ENCODE measurements at regions of chr16 and their contacts with region 1.

Region 1: GRCh38 chr16:70454222-70455034 is at the start of gene FCSK:
- DNase-seq: peak; percentile 90
- H3K4me3 ChIP-seq: peak within 1 kb of the TSS; percentile 77
- H3K27ac ChIP-seq: peak within 1 kb of the TSS; percentile 61
- H3K4me1 ChIP-seq: peaks cover 11% of the 10 kb centered on the region
- CTCF ChIP-seq: peak; percentile 67
- total RNA-seq, gene FCSK: 6.8 and 7.4 TPM in 2 replicates

Region 2: GRCh38 chr16:70380861-70381603 is 73.4 kb before region 1 on chr16:
- CTCF ChIA-PET with region 1: interaction called, 4 read pairs
- POLR2A ChIA-PET with region 1: interaction called, 14 read pairs
- intact Hi-C with region 1: loop called (anchors 1 kb)
- DNase-seq: peak; percentile 98
- H3K4me3 ChIP-seq: peak overlapping the region; percentile 89
- H3K27ac ChIP-seq: peak overlapping the region; percentile 84
- H3K4me1 ChIP-seq: peaks cover 17% of the 10 kb centered on the region
- CTCF ChIP-seq: peak; percentile 71

Region 3: DNA sequence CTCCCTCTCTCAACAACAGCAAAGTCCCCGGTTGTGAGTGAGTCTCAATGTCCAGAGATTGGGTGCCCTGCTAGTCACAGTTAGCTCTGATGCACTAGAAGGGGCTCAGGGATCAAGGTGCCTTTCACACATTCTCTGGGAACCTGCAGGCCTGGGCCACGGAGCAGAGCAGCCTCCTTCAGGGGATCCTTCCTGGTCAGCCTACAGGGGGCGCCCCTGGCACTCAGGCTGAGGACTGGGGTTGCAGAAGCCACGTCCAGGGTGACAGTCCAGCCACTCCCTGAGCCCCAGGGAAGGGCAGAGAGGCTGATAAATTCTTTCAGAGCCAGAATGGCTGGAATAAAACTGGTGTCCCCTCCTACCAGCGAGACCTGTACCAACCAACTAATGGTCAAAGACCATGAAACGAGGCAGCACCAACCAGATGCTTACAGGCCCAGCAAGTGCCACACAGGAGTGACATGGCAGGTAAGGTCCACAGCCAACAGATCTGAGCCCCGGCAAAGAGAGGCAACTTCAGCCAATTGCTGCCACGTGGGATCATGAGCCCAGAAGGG is 59.0 kb before region 1 on chr16:
- CTCF ChIA-PET with region 1: interaction called, 3 read pairs
- POLR2A ChIA-PET with region 1: interaction called, 6 read pairs
- intact Hi-C with region 1: loop called (anchors 1 kb)
- DNase-seq: peak; percentile 76
- H3K4me3 ChIP-seq: no peak overlapping the region
- H3K27ac ChIP-seq: no peak overlapping the region
- H3K4me1 ChIP-seq: peaks cover 5% of the 10 kb centered on the region
- CTCF ChIP-seq: peak; percentile 97

Region 4: DNA sequence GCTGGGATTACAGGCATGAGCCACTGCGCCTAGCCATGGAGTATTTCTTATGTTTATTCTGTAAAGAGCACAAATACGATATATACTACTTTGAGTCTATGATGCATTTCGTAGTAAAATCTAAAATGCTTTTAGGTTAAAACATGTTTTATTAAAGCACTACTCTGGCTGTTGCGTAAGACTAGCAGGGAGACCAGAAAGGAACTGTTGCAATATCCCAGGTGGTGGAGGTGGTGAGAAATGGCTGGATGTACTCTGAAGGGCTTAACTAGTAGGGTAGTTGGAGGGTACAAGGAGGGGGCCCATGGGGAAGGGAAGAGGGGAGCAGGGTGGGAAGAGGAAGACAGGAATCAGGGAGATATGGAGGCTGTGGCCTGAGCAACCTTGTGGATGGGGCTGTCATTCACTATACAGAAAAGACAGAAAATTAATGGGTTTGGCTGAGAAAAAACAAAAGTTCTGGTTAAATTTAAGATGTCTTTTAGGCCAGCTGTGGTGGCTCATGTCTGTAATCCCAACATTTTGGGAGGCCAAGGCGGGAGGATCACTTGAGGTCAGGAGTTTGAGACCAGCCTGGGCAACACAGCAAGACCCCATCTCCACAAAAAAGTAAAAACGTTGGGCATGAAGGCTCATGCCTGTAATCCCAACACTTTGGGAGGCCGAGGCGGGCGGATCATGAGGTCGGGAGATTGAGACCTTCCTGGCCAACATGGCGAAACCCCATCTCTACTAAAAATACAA is 51.3 kb before region 1 on chr16:
- CTCF ChIA-PET with region 1: no interaction called
- POLR2A ChIA-PET with region 1: interaction called, 8 read pairs
- intact Hi-C with region 1: loop called (anchors 2 kb)
- DNase-seq: no peak
- H3K4me3 ChIP-seq: no peak overlapping the region
- H3K27ac ChIP-seq: peak overlapping the region; percentile 96
- H3K4me1 ChIP-seq: peaks cover 72% of the 10 kb centered on the region
- CTCF ChIP-seq: no peak

Region 5: DNA sequence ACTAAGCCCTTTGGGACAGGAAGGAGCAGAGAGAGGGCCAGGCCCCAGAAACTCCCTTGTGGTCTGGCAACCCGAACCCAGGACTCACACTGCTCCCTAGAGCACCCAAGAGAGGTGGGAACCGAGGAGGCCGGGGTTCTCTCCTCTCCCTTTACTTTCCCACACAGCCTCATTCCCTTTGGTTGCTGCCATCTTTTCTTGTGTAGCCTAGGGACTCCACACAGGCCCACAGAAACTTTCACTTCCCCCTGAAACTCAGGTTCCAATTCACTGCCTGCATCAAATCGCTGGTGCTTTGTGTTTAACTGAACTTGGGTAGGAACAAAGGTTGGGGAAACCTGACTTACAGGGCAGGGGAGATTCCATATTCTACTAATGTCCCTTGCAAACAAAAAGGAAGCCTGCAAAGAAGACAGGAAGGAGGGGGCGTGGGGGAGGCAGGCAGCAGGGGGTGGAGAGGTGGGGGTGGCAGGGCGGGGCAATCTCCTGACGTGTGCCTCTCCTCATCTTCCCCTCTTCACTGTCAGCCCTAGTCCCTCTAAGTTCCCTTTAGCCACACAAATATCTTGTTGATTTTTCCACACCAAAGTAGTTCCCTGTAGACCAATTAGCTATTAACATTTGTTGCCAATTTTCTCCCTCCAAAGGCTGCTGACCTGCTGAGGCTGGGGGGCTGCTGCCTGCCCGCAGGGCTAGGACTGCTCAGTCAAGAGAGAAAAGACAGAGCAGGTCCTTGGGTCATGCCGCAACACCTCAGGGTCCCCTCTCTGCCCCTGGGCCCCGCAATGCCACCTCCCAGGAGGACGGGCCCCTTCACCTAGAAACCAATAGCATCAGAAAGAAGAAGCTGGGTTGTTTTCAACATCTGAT is 23.5 kb before region 1 on chr16:
- CTCF ChIA-PET with region 1: interaction called, 3 read pairs
- POLR2A ChIA-PET with region 1: interaction called, 12 read pairs
- intact Hi-C with region 1: no loop called
- DNase-seq: peak; percentile 94
- H3K4me3 ChIP-seq: peak overlapping the region; percentile 59
- H3K27ac ChIP-seq: peak overlapping the region; percentile 100
- H3K4me1 ChIP-seq: peaks cover 78% of the 10 kb centered on the region
- CTCF ChIP-seq: no peak

Region 6: GRCh38 chr16:70438969-70439862 is 15.2 kb before region 1 on chr16 and contains the start of gene ST3GAL2:
- CTCF ChIA-PET with region 1: interaction called, 6 read pairs
- POLR2A ChIA-PET with region 1: interaction called, 19 read pairs
- intact Hi-C with region 1: loop called (anchors 2 kb)
- DNase-seq: peak; percentile 96
- H3K4me3 ChIP-seq: peak within 1 kb of the TSS; percentile 97
- H3K27ac ChIP-seq: peak within 1 kb of the TSS; percentile 68
- H3K4me1 ChIP-seq: peaks cover 31% of the 10 kb centered on the region
- CTCF ChIP-seq: no peak
- total RNA-seq, gene ST3GAL2: 42.6 and 44.6 TPM in 2 replicates

Region 7: GRCh38 chr16:70512456-70512855 is 58.0 kb after region 1 on chr16:
- CTCF ChIA-PET with region 1: no interaction called
- POLR2A ChIA-PET with region 1: no interaction called
- intact Hi-C with region 1: no loop called
- DNase-seq: no peak
- H3K4me3 ChIP-seq: no peak overlapping the region
- H3K27ac ChIP-seq: no peak overlapping the region
- H3K4me1 ChIP-seq: peaks cover 13% of the 10 kb centered on the region
- CTCF ChIP-seq: no peak

Region 8: DNA sequence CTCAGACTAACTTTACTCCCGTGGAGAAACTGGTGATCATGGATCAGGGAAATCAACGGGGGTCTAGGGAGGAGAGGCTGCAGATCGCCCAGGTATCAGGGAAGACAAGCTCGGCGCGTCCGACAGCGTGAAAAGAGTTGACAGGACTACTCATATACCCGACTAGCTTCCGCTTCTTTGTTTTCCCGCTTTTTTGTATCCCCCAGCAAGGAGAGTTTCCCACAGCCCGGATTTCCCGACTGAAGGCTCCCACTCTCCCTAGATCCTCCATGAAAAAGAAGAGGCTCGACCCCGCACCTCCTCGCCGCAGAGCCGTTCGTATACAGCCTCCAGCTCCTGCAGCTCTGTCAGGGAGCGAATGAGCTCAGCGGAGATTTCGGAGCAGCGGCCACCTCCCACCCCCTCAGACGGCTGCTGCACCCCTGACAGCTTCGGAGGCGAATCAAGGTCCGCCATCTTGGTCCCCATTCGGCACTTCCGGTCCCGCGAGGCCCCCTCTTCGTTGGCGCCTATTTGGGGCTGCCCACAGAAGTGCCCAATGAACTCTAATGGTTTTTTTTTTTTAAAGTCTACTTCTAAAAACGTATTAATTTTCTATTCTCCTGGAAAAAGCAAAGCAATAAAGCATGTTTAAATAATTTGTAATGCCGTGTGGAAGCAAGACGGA is 68.8 kb after region 1 on chr16 and contains the start of gene COG4:
- CTCF ChIA-PET with region 1: no interaction called
- POLR2A ChIA-PET with region 1: interaction called, 13 read pairs
- intact Hi-C with region 1: no loop called
- DNase-seq: peak; percentile 95
- H3K4me3 ChIP-seq: peak within 1 kb of the TSS; percentile 99
- H3K27ac ChIP-seq: peak within 1 kb of the TSS; percentile 88
- H3K4me1 ChIP-seq: peaks cover 47% of the 10 kb centered on the region
- CTCF ChIP-seq: no peak
- total RNA-seq, gene COG4: 41.9 and 48.8 TPM in 2 replicates